ENCODE measurements at regions of chr19 and their contacts with region 1.

Region 1: GRCh38 chr19:13932911-13933393 is 5.3 kb downstream of the PODNL1 start:
- DNase-seq: no peak
- ATAC-seq: no peak
- H3K4me3 ChIP-seq: no peak overlapping the region
- H3K4me3 Mint-ChIP-seq: no peak overlapping the region
- H3K27ac ChIP-seq: no peak overlapping the region
- H3K27ac Mint-ChIP-seq: no peak overlapping the region
- H3K4me1 ChIP-seq: peaks cover 5% of the 10 kb centered on the region
- H3K4me1 Mint-ChIP-seq: no peaks in the 10 kb centered on the region
- H3K27me3 ChIP-seq: peaks cover 4 to 7% of the 10 kb centered on the region in 2 experiments
- H3K27me3 Mint-ChIP-seq: peaks cover 11% of the 10 kb centered on the region
- CTCF ChIP-seq: no peak

Region 2: GRCh38 chr19:12230751-12231733 is 1701.9 kb before region 1 on chr19:
- CTCF ChIA-PET with region 1: no interaction called
- POLR2A ChIA-PET with region 1: no interaction called
- intact Hi-C with region 1: no loop called
- DNase-seq: no peak
- ATAC-seq: no peak
- H3K4me3 ChIP-seq: no peak overlapping the region
- H3K4me3 Mint-ChIP-seq: no peak overlapping the region
- H3K27ac ChIP-seq: no peak overlapping the region
- H3K27ac Mint-ChIP-seq: no peak overlapping the region
- H3K4me1 ChIP-seq: no peaks in the 10 kb centered on the region
- H3K4me1 Mint-ChIP-seq: no peaks in the 10 kb centered on the region
- H3K27me3 ChIP-seq: no peaks in the 10 kb centered on the region
- H3K27me3 Mint-ChIP-seq: no peaks in the 10 kb centered on the region
- CTCF ChIP-seq: no peak

Region 3: GRCh38 chr19:13887517-13887916 is 45.4 kb before region 1 on chr19:
- CTCF ChIA-PET with region 1: no interaction called
- POLR2A ChIA-PET with region 1: no interaction called
- intact Hi-C with region 1: loop called in 1 of 2 experiments (anchors 5 kb)
- DNase-seq: peak in 1 of 14 experiments; percentile 30
- ATAC-seq: peak; percentile 37
- H3K4me3 ChIP-seq: no peak overlapping the region
- H3K4me3 Mint-ChIP-seq: no peak overlapping the region
- H3K27ac ChIP-seq: no peak overlapping the region
- H3K27ac Mint-ChIP-seq: no peak overlapping the region
- H3K4me1 ChIP-seq: peaks cover 46% of the 10 kb centered on the region
- H3K4me1 Mint-ChIP-seq: peaks cover 13% of the 10 kb centered on the region
- H3K27me3 ChIP-seq: no peaks in the 10 kb centered on the region
- H3K27me3 Mint-ChIP-seq: no peaks in the 10 kb centered on the region
- CTCF ChIP-seq: no peak